ENCODE measurements at regions of chr13 and their contacts with region 1.

Region 1: DNA sequence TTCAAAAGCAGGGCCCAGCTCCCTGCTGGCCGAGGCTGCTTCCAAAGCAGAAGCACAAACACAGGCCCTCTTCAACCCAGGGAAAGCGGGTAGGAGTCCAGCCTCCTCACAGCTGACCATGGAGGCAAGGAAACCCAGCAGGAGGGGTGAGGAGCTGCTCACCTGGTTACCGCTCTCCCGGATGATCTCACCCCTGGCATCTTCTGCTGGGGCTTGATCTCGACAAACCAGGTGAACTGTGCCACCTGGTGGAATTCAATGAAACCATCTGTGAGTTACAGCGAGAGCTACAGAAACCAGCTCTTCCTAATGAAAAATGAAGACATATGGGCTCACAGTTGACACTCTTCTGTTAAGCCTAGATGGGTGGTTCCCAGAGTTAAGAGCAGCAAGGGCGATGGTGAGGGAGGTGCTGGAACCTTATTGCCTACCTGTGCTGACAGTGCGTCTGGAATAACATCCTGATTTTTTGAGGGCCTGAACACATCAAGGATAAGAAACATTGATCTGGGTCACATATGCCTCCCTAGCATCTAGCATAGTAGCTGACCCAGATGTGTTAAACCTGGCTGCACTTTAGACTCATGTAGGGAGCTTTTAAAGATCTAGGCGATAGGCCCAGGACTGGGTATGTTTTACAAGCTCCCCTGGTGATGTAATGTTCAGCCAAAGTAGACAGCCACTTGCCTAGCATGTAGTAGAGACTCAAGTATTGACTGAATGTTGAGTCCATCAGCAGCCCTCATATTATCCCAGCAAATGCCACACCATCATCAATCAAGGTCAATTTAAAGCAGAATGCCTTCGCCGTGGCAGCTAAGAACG is 6.1 kb downstream of the DHRS12 start:
- DNase-seq: peak in 1 of 2 experiments; percentile 55
- H3K4me3 ChIP-seq: no peak overlapping the region
- H3K27ac ChIP-seq: no peak overlapping the region
- H3K4me1 ChIP-seq: peaks cover 4 to 18% (median 6%) of the 10 kb centered on the region in 4 experiments
- H3K27me3 ChIP-seq: no peaks in the 10 kb centered on the region
- CTCF ChIP-seq: peak; percentile 36 to 84 (median 63)
- EP300 ChIP-seq: no peak
- POLR2A ChIP-seq: no peak
- RAD21 ChIP-seq: peak; percentile 90 to 92

Region 2: GRCh38 chr13:51444922-51445321 is 353.0 kb before region 1 on chr13:
- CTCF ChIA-PET with region 1: interaction called, 28 read pairs
- POLR2A ChIA-PET with region 1: interaction called, 3 read pairs
- DNase-seq: no peak
- H3K4me3 ChIP-seq: no peak overlapping the region
- H3K27ac ChIP-seq: no peak overlapping the region
- H3K4me1 ChIP-seq: no peaks in the 10 kb centered on the region
- H3K27me3 ChIP-seq: no peaks in the 10 kb centered on the region; a peak in 1 of 7 replicates
- CTCF ChIP-seq: peak in 1 of 3 experiments; percentile 25; a peak in 2 of 4 replicates
- EP300 ChIP-seq: no peak
- POLR2A ChIP-seq: no peak
- RAD21 ChIP-seq: peak; percentile 55 to 56

Region 3: GRCh38 chr13:51767100-51767499 is 30.8 kb before region 1 on chr13:
- CTCF ChIA-PET with region 1: interaction called, 34 read pairs
- POLR2A ChIA-PET with region 1: interaction called, 4 read pairs
- DNase-seq: no peak
- H3K4me3 ChIP-seq: no peak overlapping the region
- H3K27ac ChIP-seq: no peak overlapping the region
- H3K4me1 ChIP-seq: peaks cover 7 to 12% (median 9%) of the 10 kb centered on the region in 4 experiments
- H3K27me3 ChIP-seq: no peaks in the 10 kb centered on the region
- CTCF ChIP-seq: peak in 2 of 3 experiments; percentile 66 to 84; a peak in 3 of 4 replicates
- EP300 ChIP-seq: no peak
- POLR2A ChIP-seq: no peak
- RAD21 ChIP-seq: peak; percentile 75 to 77

Region 4: DNA sequence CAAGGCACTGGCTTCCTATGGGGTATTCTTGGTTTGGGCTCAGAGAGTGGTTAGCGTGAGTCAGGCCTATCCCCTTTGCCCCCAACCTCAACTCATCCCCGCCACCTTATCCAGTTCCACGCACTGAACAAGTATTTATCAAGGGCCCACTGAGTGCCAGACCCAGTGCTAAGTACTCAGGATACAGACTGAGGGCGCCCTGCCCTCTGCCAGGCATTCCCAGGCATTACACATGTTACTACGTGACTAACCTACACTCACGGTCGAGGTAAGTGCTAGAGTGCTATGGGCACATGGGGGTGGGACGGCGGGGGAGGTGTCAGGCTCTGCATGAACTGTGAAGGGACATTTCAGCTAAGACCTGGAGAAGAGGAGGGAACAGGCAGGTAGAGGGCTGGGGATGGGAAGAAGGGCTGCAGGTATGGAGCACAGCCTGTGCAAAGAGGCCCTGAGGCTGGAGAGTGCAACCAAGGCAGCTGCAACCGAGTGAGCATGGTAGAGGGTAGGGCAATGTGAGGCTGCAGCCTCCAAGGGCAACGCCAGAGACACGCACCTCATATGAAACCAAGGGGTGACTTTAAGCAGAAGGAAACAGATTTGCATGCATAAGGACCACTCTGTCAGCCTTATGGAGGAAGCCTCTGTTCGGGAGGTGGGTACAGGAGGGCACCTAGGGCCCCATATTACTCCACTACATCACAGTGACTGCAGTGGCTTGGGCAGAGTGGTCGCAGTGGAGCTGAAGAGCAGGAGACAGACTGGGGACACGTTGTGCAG is 16.4 kb before region 1 on chr13:
- CTCF ChIA-PET with region 1: interaction called, 123 read pairs
- POLR2A ChIA-PET with region 1: interaction called, 5 read pairs
- DNase-seq: no peak
- H3K4me3 ChIP-seq: no peak overlapping the region
- H3K27ac ChIP-seq: no peak overlapping the region
- H3K4me1 ChIP-seq: peaks cover 0 to 4% (median 0%) of the 10 kb centered on the region in 4 experiments; a peak in 2 of 7 replicates
- H3K27me3 ChIP-seq: no peaks in the 10 kb centered on the region; a peak in 1 of 7 replicates
- CTCF ChIP-seq: peak; percentile 38 to 69 (median 56); a peak in 3 of 4 replicates
- EP300 ChIP-seq: no peak
- POLR2A ChIP-seq: no peak
- RAD21 ChIP-seq: peak; percentile 76 to 77

Measured in H1 (cell line).